Naive thymus-derived CD8-positive, alpha-beta T cell (primary cell): ENCODE measurements at regions of chr20 and their contacts with region 1.

Region 1: DNA sequence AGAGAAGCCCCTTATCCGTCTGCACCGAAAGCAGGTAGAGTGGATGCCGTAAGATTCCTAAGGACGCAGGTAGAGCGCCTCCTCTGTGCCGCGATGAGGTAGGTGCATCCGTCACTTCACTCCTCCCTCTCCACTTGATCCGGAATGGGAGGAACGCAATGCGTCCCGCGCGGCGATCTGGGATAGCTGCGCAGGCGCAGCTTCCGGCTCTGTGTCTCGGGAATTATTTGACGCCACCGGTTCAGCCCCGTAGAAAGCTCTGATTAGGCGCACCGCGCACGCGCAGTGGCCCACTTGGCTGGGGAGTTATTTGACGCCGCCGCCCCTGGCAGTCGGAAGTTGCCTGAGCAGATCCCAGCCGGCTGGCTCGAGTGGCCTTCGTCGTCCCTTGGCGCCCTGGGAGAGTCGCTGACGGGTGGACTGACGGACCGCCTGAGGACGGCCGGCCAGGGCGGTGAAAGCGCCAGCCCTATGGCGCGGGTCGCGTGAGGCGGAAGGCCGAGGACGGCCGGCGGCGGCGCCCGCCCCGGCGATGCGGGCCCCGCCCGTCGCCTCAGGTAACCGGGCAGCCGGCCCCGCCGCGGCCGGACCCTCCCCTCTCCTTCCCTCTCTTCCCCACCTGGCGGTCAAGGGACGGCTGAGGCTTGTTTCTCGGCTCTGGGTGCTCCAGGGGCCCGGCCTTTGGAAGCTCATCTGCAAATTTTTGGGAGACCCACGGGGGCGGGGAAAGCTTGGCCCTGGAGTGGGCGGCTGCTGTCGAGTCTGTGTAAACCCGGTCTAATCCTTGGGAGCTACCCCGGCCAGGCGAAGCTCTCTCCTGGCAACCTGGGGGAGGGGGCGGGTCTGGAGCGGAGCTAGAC is at the start of gene RALGAPB:
- DNase-seq: peak; percentile 94 to 99 (median 98)
- ATAC-seq: peak; percentile 93 to 95
- H3K4me3 Mint-ChIP-seq: peak within 1 kb of the TSS; percentile 83 to 93 (median 87)
- H3K27ac Mint-ChIP-seq: peak within 1 kb of the TSS; percentile 91 to 96 (median 94)
- H3K4me1 Mint-ChIP-seq: peaks cover 22 to 54% (median 52%) of the 10 kb centered on the region in 4 donors
- H3K27me3 Mint-ChIP-seq: no peaks in the 10 kb centered on the region
- polyA plus RNA-seq, gene RALGAPB: 8.8 to 13.8 (median 9.3) TPM

Region 2: GRCh38 chr20:38434743-38435554 is 37.8 kb before region 1 on chr20 and contains the start of gene SNHG17:
- POLR2A ChIA-PET with region 1: interaction called, 32 read pairs
- DNase-seq: peak; percentile 82 to 93 (median 87)
- ATAC-seq: peak; percentile 82 to 88
- H3K4me3 Mint-ChIP-seq: peak within 1 kb of the TSS; percentile 85 to 98 (median 94)
- H3K27ac Mint-ChIP-seq: peak within 1 kb of the TSS; percentile 88 to 99 (median 97)
- H3K4me1 Mint-ChIP-seq: peaks cover 20 to 45% (median 38%) of the 10 kb centered on the region in 4 donors
- H3K27me3 Mint-ChIP-seq: peaks cover 0 to 5% (median 3%) of the 10 kb centered on the region in 5 donors
- polyA plus RNA-seq, gene SNHG17: 33.8 to 127 (median 57.0) TPM

Region 3: DNA sequence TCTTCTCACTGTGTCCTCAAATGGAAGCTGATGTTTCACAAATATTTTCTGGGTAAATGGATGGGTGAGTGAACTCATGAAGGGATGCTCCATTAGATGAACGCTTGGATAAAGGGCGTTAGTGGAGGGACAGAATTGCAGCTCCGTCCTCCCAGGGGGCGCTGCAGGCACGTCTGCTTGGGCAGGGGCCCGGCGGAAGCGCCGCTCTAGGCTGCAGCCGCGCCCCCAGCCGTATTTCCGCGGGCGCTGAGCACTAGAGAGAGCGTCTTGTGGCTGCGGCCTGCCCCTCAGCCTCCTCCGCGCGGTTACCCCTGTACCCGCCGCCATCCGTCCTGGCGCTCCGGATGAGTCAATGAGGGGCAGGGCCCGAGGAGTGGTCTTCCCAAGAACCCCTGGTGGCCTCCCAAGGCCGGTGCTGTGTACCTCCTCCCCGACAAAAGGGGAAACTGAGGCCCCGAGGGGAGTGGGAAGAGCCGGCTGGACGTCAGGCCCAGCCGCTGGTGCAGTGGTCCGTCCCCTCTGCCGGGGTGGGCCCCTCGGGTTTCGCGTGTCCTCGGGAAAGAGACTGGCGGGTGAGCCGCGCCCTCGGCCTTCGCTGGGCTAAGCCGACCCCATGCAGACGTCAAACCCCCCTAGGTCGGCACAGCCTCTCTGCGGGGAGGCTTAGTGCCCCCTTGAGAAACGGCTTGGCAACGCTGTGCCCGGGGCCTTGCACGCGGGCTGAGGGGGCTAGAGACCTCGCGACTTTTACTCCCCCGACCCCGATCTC is 26.1 kb before region 1 on chr20:
- POLR2A ChIA-PET with region 1: interaction called, 65 read pairs
- DNase-seq: peak; percentile 82 to 94 (median 91)
- ATAC-seq: peak; percentile 98
- H3K4me3 Mint-ChIP-seq: peak overlapping the region; percentile 77 to 94 (median 86)
- H3K27ac Mint-ChIP-seq: peak overlapping the region; percentile 85 to 95 (median 92)
- H3K4me1 Mint-ChIP-seq: peaks cover 24 to 32% (median 27%) of the 10 kb centered on the region in 4 donors
- H3K27me3 Mint-ChIP-seq: peaks cover 0 to 7% (median 0%) of the 10 kb centered on the region in 5 donors